Ascending aorta (tissue), 2 donors: ENCODE measurements at regions of chr6 and their contacts with region 1.

Region 1: DNA sequence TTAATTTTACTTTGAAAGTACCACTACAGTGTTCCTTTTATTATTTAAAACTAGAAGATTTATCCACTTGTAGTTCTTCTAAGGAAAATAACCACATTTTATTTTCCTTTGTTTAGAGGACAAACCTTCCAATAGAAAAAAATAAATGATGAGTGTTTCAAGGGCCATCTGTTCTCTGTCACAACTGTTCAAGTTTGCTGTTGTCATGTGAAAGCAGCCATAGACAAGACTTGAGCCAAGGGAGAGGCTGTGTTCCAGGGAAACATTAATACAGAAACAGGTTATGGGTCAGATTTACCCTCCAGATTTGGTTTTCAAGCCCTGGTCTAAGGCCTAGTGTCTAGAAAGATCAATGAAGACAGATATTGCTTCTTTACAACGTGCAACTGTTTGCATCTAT is 463.6 kb downstream of the C6orf118 start:
- DNase-seq: no peak
- H3K4me3 ChIP-seq: no peak overlapping the region
- H3K27ac ChIP-seq: no peak overlapping the region
- H3K4me1 ChIP-seq: no peaks in the 10 kb centered on the region
- H3K27me3 ChIP-seq: no peaks in the 10 kb centered on the region
- CTCF ChIP-seq: no peak

Region 2: GRCh38 chr6:163999475-164000125 is 846.2 kb before region 1 on chr6:
- intact Hi-C with region 1: loop called (anchors 10 kb)
- DNase-seq: no peak
- H3K4me3 ChIP-seq: no peak overlapping the region
- H3K27ac ChIP-seq: no peak overlapping the region
- H3K4me1 ChIP-seq: no peaks in the 10 kb centered on the region
- H3K27me3 ChIP-seq: no peaks in the 10 kb centered on the region
- CTCF ChIP-seq: no peak

Region 3: GRCh38 chr6:164690241-164690640 is 155.5 kb before region 1 on chr6:
- intact Hi-C with region 1: no loop called
- DNase-seq: no peak
- H3K4me3 ChIP-seq: no peak overlapping the region
- H3K27ac ChIP-seq: no peak overlapping the region
- H3K4me1 ChIP-seq: no peaks in the 10 kb centered on the region
- H3K27me3 ChIP-seq: no peaks in the 10 kb centered on the region
- CTCF ChIP-seq: no peak